ENCODE measurements at regions of chr9 and their contacts with region 1.

Region 1: GRCh38 chr9:135961277-135961705 is at the start of gene UBAC1:
- DNase-seq: peak; percentile 98
- ATAC-seq: peak; percentile 92
- H3K4me3 Mint-ChIP-seq: peak within 1 kb of the TSS; percentile 87
- H3K27ac Mint-ChIP-seq: peak within 1 kb of the TSS; percentile 73
- H3K4me1 Mint-ChIP-seq: peaks cover 32% of the 10 kb centered on the region
- H3K27me3 Mint-ChIP-seq: no peaks in the 10 kb centered on the region
- total RNA-seq, gene UBAC1: 41.7 to 42.8 TPM

Region 2: DNA sequence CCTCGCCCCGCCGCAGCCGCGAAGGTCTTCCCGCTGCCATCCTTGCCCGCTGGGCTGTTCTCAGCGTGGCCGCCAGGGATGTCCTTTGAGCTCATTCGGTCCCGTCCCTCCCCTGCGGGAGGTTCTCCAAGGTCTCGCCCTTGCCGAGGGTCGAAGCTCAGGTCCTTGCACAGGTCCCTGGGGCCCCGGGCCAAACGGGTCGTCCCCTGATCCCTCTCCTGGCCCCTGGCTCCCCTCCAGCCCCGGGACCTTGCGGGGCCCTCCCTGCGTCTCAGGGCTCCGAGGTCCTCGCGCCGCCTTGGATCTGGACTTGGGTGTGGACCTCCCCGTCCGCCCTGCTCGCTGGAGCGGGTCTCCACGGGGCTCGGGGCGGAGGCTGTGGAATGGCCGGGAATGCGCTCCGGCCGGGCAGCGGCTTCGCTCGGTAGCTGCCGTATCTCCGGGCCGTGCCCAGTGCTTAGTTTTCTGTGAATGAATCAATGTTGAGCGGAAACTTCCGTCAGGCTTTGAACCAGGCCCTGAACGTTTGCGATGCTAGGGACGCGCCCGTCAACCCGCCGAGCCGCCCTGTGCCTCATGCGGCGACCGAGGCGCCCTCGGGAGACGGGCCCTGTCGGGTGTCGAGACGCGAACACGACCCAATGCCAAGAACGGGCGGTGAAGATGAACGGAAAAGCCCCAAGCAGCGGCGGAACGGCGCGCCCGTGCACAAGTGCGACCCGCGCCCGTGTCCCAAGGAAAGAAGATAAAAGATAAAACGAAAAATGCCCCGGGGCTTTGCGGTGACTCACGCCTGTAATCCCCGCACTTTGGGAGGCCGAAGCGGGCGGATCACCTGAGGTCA is 1797.7 kb before region 1 on chr9:
- CTCF ChIA-PET with region 1: no interaction called
- POLR2A ChIA-PET with region 1: no interaction called
- intact Hi-C with region 1: loop called in 1 of 2 experiments (anchors 1 kb)
- DNase-seq: peak; percentile 83
- ATAC-seq: peak; percentile 39
- H3K4me3 Mint-ChIP-seq: no peak overlapping the region
- H3K27ac Mint-ChIP-seq: no peak overlapping the region
- H3K4me1 Mint-ChIP-seq: peaks cover 2% of the 10 kb centered on the region
- H3K27me3 Mint-ChIP-seq: no peaks in the 10 kb centered on the region

Region 3: GRCh38 chr9:135701959-135702721 is 259.2 kb before region 1 on chr9 and contains the start of gene KCNT1:
- CTCF ChIA-PET with region 1: no interaction called
- POLR2A ChIA-PET with region 1: no interaction called
- intact Hi-C with region 1: loop called in 1 of 2 experiments (anchors 5 kb)
- DNase-seq: peak; percentile 74
- ATAC-seq: peak; percentile 85
- H3K4me3 Mint-ChIP-seq: no peak within 1 kb of the TSS
- H3K27ac Mint-ChIP-seq: no peak within 1 kb of the TSS
- H3K4me1 Mint-ChIP-seq: no peaks in the 10 kb centered on the region
- H3K27me3 Mint-ChIP-seq: peaks cover 3% of the 10 kb centered on the region
- total RNA-seq, gene KCNT1: not detected

Region 4: DNA sequence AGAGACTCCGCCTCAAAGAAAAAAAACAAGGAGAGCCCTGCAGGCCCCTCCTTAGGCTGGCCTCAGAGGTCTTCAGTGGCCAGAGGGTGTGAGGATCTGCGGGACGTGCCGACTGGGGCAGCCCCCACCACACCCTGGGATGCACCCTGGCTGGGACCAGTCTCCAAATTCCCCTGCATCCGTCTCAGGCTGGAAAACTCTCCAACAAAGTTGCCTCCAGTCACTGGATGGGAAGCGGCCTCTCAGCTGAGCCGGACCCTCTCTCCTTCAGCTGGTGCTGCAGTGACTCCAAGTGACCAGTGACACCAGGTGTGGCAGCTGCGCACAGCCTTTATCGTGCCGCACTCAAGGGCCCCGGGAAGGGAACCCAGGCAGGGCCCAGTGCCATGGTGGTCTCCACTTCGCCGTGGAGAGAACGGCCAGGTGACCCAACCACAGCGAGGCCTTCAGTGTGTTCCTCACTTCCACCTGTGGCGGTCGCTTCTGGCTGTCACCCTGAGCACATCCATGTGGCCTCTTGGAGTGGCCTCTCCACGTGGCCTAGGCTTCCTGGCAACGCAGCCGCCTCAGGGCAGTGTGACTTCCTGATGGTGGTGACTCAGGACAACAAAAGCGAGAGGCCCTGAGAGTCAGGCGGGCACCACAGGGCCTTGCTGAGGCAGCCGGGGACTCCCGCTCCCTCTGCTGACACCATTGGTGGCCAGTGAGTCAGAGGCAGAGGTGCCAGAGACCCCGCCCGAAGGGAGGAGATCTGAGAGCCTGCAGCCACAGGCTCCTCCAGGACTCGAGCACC is 34.7 kb before region 1 on chr9:
- CTCF ChIA-PET with region 1: interaction called, 11 read pairs
- POLR2A ChIA-PET with region 1: interaction called, 3 read pairs
- intact Hi-C with region 1: loop called (anchors 1 to 2 kb)
- DNase-seq: peak; percentile 95
- ATAC-seq: peak; percentile 91
- H3K4me3 Mint-ChIP-seq: peak overlapping the region; percentile 19
- H3K27ac Mint-ChIP-seq: peak overlapping the region; percentile 94
- H3K4me1 Mint-ChIP-seq: peaks cover 39% of the 10 kb centered on the region
- H3K27me3 Mint-ChIP-seq: no peaks in the 10 kb centered on the region

Region 5: GRCh38 chr9:136109351-136110081 is 148.2 kb after region 1 on chr9:
- CTCF ChIA-PET with region 1: no interaction called
- POLR2A ChIA-PET with region 1: no interaction called
- intact Hi-C with region 1: loop called in 1 of 2 experiments (anchors 1 kb)
- DNase-seq: peak; percentile 97
- ATAC-seq: peak; percentile 88
- H3K4me3 Mint-ChIP-seq: peak overlapping the region; percentile 78
- H3K27ac Mint-ChIP-seq: peak overlapping the region; percentile 97
- H3K4me1 Mint-ChIP-seq: peaks cover 71% of the 10 kb centered on the region
- H3K27me3 Mint-ChIP-seq: no peaks in the 10 kb centered on the region

Region 6: DNA sequence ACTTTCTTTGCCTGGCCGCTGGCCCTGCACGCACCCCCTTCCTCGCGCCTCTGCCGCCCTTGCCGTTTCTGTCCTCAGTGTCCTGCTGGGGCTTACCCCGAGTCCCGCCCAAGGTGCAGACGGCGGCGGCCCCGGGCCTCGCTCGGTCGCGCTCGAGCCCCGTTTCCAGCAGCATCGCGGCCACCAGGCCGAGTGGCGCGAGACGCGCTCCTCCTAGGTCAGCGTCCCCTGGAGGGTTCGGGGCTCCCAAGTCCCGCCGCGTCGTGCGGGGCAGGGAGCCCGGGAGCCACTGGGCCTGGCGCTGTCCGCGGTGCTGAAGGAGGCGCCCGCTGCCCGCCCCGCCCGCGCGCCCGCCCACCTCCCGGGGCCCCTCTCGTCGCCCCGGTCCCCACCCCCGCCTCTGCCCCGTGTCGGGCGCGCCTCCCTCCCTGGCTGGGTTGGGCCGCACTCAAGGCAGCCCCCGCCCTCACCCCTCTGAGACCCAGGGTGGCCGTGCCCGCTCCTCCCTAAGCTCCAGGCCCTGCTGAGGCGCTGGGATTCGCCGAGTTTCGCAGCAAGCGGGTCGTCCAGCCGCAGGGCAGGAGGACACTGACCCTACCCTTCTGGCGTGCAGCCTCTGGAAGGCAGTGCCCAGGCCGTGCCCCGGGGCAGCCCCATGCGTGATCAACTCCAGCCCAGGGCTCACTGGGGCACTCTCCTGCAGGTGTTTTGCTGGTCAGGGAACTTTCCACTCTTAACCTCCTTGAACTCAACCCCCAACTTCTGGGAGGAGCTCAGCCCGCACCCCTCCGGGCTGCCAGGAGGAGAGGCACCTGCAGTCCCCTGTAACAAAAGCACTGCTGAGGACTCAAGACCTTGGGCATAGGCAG is 243.8 kb after region 1 on chr9 and contains the start of gene LHX3:
- CTCF ChIA-PET with region 1: no interaction called
- POLR2A ChIA-PET with region 1: no interaction called
- intact Hi-C with region 1: no loop called
- DNase-seq: peak; percentile 55
- ATAC-seq: peak; percentile 23
- H3K4me3 Mint-ChIP-seq: no peak within 1 kb of the TSS
- H3K27ac Mint-ChIP-seq: no peak within 1 kb of the TSS
- H3K4me1 Mint-ChIP-seq: no peaks in the 10 kb centered on the region
- H3K27me3 Mint-ChIP-seq: peaks cover 22% of the 10 kb centered on the region
- total RNA-seq, gene LHX3: not detected

Region 7: DNA sequence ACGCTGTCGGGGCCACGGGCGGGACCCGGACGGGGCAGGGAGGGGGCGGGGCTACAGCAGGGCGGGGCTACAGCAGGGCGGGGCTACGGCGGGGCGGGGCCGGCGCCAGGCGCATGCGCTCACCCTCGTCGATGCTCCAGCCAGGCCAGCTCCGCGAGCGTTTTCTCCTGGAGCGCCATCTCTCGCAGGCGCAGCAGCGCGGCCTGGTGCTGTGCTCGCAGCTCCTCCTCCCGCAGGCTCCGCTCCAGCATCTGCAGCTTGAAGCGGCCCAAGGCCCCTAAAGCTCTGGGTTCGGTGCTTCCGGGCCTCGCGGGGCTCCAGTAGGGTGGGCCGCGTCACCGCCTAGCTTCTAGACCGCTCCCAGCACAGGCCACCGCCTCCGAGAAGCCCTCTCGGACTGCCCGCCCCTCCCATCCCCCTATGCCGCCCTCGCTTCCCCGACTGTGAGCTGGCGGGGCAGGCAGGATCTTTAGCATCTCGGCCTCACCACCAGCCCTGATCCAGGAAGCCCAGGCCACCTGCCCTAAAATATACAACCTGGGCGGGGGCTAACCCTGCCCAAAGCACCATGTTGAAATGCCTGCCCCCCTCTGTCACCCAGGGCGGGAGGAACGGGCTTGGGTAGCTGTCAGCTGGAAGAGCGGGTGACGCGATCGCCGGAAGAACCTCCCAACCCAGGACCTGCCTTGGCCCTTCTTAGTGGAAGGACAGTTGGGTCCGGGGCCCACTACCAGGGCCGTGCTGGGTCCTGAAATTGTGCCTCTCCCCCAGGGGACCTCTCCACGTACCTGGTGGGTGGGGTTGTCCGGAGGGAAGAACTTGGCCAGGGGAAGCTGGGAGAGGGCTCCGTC is 306.2 kb after region 1 on chr9:
- CTCF ChIA-PET with region 1: no interaction called
- POLR2A ChIA-PET with region 1: no interaction called
- intact Hi-C with region 1: loop called in 1 of 2 experiments (anchors 1 kb)
- DNase-seq: peak; percentile 92
- ATAC-seq: peak; percentile 99
- H3K4me3 Mint-ChIP-seq: peak overlapping the region; percentile 69
- H3K27ac Mint-ChIP-seq: peak overlapping the region; percentile 58
- H3K4me1 Mint-ChIP-seq: peaks cover 6% of the 10 kb centered on the region
- H3K27me3 Mint-ChIP-seq: no peaks in the 10 kb centered on the region

Region 8: DNA sequence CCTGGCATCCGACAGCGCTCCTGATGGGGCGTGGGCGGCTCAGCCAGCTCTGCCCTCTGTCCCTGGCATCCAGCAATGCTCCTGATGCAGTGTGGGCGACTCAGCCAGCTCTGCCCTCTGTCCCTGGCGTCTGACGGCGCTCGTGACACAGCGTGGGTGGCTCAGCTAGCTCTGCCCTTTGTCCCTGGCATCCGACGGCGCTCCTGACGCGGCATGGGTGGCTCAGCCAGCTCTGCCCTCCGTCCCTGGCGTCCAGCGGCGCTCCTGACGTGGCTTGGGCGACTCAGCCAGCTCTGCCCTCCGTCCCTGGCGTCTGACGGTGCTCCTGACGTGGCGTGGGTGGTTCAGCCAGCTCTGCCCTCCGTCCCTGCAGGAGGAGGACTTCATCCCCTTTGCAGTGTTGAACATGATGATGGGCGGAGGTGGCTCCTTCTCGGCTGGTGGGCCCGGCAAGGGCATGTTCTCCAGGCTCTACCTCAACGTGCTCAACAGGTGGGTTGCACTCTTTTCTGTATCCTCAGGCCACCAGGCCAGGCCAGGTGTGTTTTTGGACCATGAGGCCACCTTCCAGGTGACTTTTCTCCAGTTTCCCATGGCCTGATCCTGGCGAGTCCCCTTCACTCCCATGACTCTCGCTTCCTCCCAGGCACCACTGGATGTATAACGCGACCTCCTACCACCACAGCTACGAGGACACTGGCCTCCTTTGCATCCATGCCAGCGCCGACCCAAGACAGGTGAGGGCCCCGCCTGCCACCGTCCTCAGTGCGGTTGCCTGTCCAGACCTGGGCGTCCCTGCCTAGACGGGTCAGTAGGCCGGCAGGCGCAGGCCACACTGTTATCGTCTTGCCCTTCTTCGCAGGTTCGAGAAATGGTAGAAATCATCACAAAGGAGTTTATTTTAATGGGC is 457.1 kb after region 1 on chr9:
- CTCF ChIA-PET with region 1: no interaction called
- POLR2A ChIA-PET with region 1: no interaction called
- intact Hi-C with region 1: no loop called
- DNase-seq: no peak
- ATAC-seq: no peak
- H3K4me3 Mint-ChIP-seq: no peak overlapping the region
- H3K27ac Mint-ChIP-seq: no peak overlapping the region
- H3K4me1 Mint-ChIP-seq: no peaks in the 10 kb centered on the region
- H3K27me3 Mint-ChIP-seq: no peaks in the 10 kb centered on the region

Measured in activated CD4-positive, alpha-beta T cell treated with anti-CD3 and anti-CD28 coated beads for 36 hours (primary cell).